ENCODE measurements at regions of chr15 and their contacts with region 1.

Region 1: GRCh38 chr15:92808978-92809879 is 90.9 kb upstream of the CHD2 start:
- DNase-seq: peak; percentile 97
- CTCF ChIP-seq: peak; percentile 84

Region 2: GRCh38 chr15:92820236-92821021 is 11.2 kb after region 1 on chr15:
- CTCF ChIA-PET with region 1: interaction called, 43 read pairs
- POLR2A ChIA-PET with region 1: interaction called, 10 read pairs
- DNase-seq: peak; percentile 91
- CTCF ChIP-seq: no peak

Region 3: DNA sequence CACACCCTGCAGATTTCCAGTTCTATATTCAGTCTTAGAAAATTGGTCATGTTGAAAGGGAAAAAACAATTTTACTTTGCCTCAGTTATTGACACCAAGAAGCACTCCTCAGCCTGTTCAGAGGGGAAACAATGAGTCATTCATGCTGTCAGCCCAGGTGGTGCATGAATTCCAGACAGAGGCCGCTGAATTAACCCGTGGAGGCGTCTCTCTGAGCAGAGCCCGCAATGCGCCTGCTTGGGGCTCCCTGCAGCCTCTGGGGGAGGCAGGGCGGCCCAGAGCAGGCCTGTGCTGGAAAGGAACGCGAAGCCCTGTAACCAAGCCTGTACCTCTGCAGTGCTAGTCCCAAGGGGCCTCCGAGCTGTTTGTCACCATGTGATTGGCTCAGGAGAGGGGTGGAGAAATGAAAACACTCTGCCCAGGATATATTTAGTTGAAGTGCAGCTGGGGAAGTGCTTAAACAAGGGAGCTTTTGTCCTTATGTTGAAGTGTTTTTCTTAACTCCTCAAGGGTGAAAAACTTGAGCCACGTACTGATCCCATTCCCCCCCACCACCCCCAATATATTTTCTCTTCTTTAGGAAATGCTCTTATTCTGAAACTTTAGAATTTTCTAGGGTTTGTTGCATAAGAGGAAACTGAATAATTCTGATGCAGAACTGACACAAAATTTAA is 22.6 kb after region 1 on chr15:
- CTCF ChIA-PET with region 1: interaction called, 36 read pairs
- POLR2A ChIA-PET with region 1: interaction called, 10 read pairs
- DNase-seq: peak; percentile 88
- CTCF ChIP-seq: no peak

Region 4: DNA sequence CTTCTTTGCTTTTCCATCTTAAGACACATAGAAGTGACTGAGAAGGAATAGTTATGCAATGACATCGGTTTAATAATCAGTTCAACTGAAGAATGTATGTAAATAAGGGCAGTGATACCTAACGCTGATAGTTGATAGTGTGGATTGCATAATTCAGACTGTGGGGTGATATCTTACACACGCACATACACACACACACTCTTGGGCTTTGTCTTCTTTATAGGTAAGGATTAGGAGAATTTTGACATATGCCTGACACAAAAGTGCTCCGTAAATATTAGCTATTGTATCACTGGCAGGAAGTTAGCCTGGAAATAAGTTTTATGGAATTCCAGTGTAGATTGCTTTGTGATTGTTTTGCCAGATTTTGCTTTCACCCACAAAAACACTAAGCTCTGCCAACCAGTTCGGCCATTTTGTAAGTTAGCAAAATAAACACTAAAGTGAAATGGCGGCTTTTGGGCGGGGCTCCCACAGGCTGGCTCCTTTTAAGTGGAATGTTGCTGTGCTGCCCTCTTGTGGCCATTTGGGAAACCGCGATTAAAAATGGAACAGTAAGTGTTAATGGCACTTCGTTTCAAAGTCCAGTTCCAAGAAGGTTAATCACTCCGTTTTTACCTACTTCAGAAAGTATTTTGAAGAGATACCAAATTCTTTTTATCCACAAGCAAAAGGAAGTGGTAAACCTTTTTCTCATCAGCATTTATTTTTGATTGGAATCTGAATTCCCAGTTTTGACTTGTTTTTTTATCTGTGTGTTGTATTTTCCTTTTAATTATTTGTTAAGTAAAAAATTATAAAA is 108.6 kb after region 1 on chr15:
- CTCF ChIA-PET with region 1: interaction called, 104 read pairs
- POLR2A ChIA-PET with region 1: interaction called, 5 read pairs
- DNase-seq: peak; percentile 79
- CTCF ChIP-seq: peak; percentile 82

Measured in GM10248 (cell line).